Panc1 (cell line): ENCODE measurements at regions of chr9 and their contacts with region 1.

Region 1: GRCh38 chr9:123584202-123585184 is 228.5 kb downstream of the CRB2 start:
- DNase-seq: no peak
- ATAC-seq: no peak
- H3K4me3 ChIP-seq: no peak overlapping the region
- H3K27ac ChIP-seq: no peak overlapping the region
- H3K4me1 ChIP-seq: no peaks in the 10 kb centered on the region
- H3K27me3 ChIP-seq: no peaks in the 10 kb centered on the region
- CTCF ChIP-seq: no peak

Region 2: DNA sequence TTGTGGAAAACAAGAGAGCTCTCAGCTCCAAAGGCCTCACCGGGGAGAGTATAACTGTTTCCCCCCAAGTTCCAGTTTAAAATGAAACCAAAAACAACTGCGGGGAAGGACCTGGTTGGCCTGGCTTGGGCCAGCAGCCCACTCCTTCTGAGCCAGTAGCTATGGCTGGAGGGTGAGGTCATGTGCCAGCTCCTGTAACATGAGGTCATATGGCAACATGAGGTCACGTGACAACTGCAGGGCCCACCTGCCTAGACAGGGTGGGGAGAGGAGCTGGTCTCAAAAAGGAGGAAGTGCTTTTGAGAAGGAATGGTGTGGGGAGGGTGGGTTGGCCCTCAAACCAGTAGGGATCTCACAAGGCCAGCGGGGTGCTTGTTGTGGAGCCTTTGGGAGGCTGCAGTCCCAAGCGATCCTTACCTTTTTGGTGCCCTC is 257.8 kb before region 1 on chr9:
- CTCF ChIA-PET with region 1: no interaction called
- POLR2A ChIA-PET with region 1: no interaction called
- in situ Hi-C with region 1: no loop called
- intact Hi-C with region 1: no loop called
- DNase-seq: no peak
- ATAC-seq: no peak
- H3K4me3 ChIP-seq: no peak overlapping the region
- H3K27ac ChIP-seq: no peak overlapping the region
- H3K4me1 ChIP-seq: no peaks in the 10 kb centered on the region
- H3K27me3 ChIP-seq: no peaks in the 10 kb centered on the region
- CTCF ChIP-seq: no peak

Region 3: DNA sequence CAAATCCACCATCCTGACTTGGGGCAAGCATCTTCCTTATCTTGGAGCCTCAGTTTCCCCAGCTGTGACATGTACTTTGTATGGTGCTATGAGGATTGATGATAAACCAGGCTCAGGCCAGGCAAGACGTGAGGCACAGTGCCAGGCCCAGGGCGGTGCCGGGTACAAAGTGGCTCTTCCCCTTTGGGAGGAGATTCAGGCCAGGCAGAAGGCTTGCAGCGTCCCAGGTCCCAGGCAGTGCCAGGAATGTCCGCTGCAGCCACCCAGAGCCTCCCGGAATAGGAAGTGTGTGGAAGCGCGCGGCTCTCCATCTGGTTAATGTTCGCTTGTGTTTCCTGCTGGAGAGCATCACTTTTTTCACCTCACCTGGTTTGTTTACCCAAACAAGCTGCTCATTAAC is 358.0 kb after region 1 on chr9:
- CTCF ChIA-PET with region 1: no interaction called
- POLR2A ChIA-PET with region 1: interaction called, 15 read pairs
- in situ Hi-C with region 1: no loop called
- intact Hi-C with region 1: no loop called
- DNase-seq: no peak
- ATAC-seq: no peak
- H3K4me3 ChIP-seq: no peak overlapping the region
- H3K27ac ChIP-seq: no peak overlapping the region
- H3K4me1 ChIP-seq: no peaks in the 10 kb centered on the region
- H3K27me3 ChIP-seq: no peaks in the 10 kb centered on the region
- CTCF ChIP-seq: no peak